Activated naive CD4-positive, alpha-beta T cell treated with anti-CD3 and anti-CD28 coated beads for 36 hours (primary cell): ENCODE measurements at regions of chr1 and their contacts with region 1.

Region 1: DNA sequence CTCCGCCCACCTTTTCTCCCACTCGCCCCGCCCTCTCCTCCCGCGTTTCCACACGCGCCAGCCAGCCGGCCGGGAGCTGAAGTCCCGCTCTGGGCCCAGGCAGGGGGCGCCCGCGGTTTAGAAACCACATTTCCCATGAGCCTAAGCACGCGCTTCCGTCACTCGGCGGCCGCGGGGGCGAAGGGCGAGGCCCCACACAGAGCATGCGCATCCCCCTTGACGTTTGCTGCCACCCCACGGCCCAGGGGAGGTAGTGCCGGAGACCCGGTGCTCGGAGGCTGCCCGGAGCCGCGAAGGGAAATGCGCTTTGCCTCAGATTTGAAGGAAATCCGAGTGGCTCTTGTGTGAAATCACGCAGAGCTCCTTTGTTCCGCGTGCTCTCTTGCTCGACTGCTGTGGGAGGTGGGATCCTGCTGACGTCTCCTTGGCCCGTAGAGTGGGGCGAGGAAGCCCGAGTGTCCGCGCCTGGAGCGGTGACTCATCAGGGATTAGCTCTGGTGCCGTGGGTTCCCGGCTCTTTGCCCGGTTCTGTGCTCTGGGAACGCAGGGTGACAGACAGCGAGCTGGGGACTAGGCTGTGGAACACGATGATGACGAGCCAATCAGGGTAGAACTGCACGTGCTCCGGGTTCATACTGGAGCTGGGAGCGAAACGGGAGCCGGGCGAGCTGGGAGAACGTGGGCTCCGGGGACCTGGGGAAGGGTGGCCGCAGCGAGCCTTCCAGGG is 407 bp upstream of the B3GALNT2 start:
- DNase-seq: peak; percentile 99
- H3K4me3 Mint-ChIP-seq: peak overlapping the region; percentile 97
- H3K27ac Mint-ChIP-seq: peak overlapping the region; percentile 97
- H3K4me1 Mint-ChIP-seq: peaks cover 31% of the 10 kb centered on the region
- H3K27me3 Mint-ChIP-seq: no peaks in the 10 kb centered on the region

Region 2: DNA sequence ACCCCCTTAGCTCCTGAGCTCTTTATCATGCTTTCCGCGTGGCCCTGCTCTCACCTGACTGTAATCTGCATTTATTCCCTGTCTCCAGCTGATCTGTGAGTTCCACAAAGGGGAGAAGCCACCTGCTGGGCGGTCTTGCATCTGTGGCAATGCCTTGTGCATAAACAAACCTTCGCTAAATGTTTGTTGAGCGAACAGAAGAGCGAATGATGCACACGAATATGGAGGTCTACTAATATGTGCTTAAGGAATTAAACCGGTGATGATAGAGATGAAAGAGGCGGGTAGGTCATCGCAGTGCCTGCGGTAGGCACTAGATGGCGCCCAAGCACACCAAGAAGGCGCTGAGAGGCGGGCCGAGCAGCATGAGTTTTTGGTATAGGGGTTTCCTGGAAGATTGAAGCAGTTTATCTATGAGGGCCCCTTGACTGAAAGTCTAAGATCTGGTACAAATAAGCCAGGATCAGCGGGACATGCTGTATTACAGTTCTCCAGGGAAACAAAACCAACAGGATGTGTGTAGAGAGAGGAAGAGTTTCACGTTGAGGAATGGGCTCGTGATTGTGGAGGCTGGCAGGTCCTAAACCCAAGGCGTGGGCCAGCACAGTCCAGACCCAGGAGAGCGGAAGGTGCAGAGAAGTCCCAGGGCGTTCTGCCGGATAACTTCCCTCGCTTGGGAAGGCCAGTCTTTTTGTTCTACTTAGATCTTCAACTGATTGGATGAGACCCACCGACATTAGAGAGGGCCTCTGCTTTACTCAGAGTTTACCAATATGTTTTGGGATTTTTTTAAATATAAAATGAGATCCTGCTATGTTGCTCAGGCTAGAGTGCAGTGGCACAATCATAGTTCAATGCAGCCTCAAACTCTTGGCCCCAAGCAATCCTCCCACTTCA is 410.7 kb before region 1 on chr1:
- CTCF ChIA-PET with region 1: interaction called, 7 read pairs
- intact Hi-C with region 1: loop called (anchors 1 kb)
- DNase-seq: peak; percentile 92
- H3K4me3 Mint-ChIP-seq: no peak overlapping the region
- H3K27ac Mint-ChIP-seq: no peak overlapping the region
- H3K4me1 Mint-ChIP-seq: peaks cover 7% of the 10 kb centered on the region
- H3K27me3 Mint-ChIP-seq: peaks cover 2% of the 10 kb centered on the region

Region 3: GRCh38 chr1:235128456-235129328 is 376.0 kb before region 1 on chr1 and contains the start of gene TOMM20:
- CTCF ChIA-PET with region 1: no interaction called
- intact Hi-C with region 1: loop called (anchors 1 kb)
- DNase-seq: peak; percentile 98
- H3K4me3 Mint-ChIP-seq: peak within 1 kb of the TSS; percentile 96
- H3K27ac Mint-ChIP-seq: peak within 1 kb of the TSS; percentile 94
- H3K4me1 Mint-ChIP-seq: peaks cover 38% of the 10 kb centered on the region
- H3K27me3 Mint-ChIP-seq: no peaks in the 10 kb centered on the region
- total RNA-seq, gene TOMM20: 155 to 192 TPM

Region 4: DNA sequence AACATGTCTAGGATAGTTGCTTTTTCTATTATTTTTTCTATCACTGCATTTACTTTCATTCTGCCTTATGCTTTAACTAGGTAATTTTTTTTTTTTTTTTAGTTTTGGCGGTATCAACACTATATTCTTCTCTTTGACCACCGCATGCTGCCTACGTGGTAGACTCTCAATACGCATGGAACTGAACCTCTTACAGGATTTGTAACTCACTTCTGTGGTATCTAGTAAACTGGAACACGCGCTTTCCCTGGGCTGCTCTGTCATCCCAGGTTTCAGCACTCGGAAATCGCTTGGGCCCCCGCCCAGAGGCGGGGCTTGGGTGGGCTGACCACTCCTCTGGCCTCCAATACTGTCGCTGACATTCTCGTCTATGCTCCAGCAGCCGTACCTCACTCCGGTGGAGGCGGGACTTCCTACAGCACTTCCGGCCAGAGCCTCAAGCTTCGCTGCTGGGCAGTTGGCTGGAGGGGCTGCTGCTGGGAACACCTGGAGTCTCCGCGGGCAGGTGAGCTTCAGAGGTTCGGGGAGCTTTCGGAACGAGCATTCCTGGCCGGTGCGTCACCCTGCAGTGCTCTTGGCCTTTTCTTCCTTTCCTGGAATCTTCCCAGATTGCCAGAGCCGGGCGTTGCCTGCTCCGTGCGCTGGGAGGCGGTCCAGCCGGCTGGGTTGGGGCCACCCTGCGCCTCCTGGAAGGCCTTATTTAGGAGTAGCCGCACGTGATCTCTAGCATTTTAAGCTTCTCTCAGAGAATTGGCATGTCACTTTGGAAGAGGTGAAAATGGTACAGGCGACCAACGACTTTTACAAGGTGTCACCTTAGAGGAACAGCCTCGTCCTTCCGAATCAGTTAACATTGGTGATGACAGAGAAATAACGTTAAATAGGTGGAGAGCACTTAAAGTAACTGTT is 137.4 kb before region 1 on chr1 and contains the start of gene TBCE:
- CTCF ChIA-PET with region 1: no interaction called
- intact Hi-C with region 1: loop called (anchors 2 kb)
- DNase-seq: peak; percentile 92
- H3K4me3 Mint-ChIP-seq: peak within 1 kb of the TSS; percentile 96
- H3K27ac Mint-ChIP-seq: peak within 1 kb of the TSS; percentile 90
- H3K4me1 Mint-ChIP-seq: peaks cover 27% of the 10 kb centered on the region
- H3K27me3 Mint-ChIP-seq: no peaks in the 10 kb centered on the region
- total RNA-seq, gene TBCE: 18.8 to 22.1 TPM

Region 5: DNA sequence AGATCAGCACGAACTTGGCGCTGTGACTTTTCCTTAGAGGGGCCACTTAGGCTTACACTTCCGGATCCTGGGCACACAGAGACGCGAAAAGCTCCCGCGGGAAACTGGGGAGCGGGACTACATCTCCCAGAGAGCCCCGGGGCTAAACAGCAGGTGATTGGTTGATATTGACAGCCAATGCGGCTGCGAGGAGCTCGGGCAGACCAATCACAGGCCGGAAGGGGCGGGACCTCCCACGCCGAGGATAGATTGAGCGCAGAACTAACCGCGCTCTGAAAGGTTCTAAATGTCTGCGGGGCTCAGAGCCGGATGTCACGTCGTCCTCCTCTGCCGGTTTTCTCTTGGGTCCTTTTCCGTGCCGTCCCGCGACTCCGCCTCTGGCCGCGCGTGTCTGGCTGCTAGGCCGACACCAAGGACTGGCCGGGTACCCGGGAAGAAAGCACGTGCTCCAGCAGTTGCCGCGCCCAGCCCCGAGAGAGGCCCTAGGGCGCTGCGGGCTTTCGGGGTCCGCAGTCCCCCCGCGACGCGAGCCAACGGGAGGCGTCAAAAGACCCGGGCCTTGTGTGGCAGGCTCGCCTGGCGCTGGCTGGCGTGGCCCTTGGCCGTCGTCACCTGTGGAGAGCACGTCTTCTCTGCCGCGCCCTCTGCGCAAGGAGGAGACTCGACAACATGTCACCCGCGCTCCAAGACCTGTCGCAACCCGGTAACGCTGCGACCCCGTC is 1290.5 kb after region 1 on chr1 and contains the start of gene MTR:
- CTCF ChIA-PET with region 1: no interaction called
- intact Hi-C with region 1: loop called (anchors 10 kb)
- DNase-seq: peak; percentile 98
- H3K4me3 Mint-ChIP-seq: peak within 1 kb of the TSS; percentile 80
- H3K27ac Mint-ChIP-seq: peak within 1 kb of the TSS; percentile 86
- H3K4me1 Mint-ChIP-seq: peaks cover 27% of the 10 kb centered on the region
- H3K27me3 Mint-ChIP-seq: no peaks in the 10 kb centered on the region
- total RNA-seq, gene MTR: 55.3 to 57.6 TPM